ENCODE measurements at regions of chr3 and their contacts with region 1.

Region 1: DNA sequence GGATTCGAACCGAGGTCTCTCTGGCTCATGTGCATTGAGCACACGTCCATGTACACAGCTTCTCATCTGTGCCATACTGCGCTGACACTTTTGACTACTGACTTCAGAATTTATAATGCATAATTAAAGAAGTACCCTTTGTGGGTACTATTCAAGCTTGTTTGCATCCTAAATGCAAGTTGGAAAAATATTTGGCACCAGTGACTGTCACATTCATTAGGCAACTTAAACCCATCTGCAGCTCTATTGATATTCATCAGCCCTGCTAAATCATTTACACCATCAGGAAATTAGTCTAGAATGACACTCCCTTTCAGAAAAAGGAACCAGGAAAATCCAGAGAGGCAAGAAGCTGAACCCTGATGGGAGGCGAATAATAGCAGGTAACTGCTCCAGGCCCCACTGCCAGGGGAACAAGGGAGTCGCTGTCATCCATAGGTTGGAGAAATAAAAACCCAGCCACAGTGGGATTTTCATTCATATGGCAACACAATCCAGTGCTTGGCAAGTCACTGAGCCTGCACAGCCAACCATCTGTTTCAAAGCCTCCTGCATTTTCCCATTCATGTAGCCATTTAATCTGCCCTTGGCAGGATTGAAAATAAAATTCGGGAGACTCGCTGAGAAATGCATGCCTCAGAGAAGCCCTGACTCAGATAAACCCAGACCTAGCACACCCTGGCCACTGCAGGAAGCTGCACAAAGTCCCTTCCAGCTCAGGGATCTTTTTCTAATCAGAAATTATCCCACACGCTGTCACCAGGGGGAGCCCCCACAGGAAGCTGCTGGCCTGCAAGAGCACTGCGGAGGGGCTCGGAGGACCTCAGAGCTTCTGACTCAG is 103.0 kb upstream of the VEPH1 start:
- DNase-seq: peak; percentile 51
- CTCF ChIP-seq: peak; percentile 85

Region 2: DNA sequence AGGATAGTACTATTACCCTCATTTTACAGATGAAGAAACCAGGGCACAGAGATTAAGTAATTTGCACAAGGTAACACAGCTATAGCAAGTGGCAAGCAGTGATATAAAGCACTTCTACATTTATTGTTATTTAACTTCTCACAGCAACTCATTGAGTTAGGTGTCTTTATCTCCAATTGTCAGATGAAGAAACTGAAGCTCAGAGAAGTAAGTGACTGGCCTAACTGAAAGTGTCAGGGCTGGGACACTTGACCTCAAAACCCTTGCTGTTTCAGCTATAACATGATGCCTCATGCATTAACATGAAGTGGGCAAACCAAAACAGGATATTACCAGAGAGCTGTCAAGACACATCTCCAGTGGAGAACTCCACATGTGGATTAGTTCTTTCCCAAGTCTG is 845.9 kb before region 1 on chr3:
- CTCF ChIA-PET with region 1: no interaction called
- POLR2A ChIA-PET with region 1: no interaction called
- DNase-seq: peak; percentile 21
- CTCF ChIP-seq: no peak

Region 3: GRCh38 chr3:157532529-157533297 is 73.5 kb before region 1 on chr3:
- CTCF ChIA-PET with region 1: interaction called, 19 read pairs
- POLR2A ChIA-PET with region 1: no interaction called
- DNase-seq: peak; percentile 50
- CTCF ChIP-seq: peak; percentile 78

Region 4: GRCh38 chr3:157581371-157581770 is 24.9 kb before region 1 on chr3:
- CTCF ChIA-PET with region 1: interaction called, 12 read pairs
- POLR2A ChIA-PET with region 1: no interaction called
- DNase-seq: no peak
- CTCF ChIP-seq: no peak

Region 5: DNA sequence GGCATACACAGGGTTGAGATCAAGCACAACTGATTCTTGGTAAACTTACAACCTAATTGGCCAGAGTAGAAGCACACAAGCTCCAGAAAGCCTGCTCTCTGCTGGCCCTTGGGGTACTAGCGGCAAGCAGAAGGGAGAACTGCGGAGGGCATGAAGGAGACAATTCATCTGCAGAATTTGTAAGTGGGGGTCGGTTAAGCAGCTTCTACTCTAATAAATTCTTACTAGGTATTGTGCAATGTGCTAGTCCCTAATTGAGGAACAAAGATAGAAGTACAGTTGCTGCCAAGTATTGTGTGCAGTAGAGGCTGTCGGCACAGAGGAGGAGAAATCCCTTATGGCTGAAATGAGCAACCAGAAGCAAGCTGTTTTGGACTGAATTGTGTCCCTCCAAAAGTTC is 11.8 kb before region 1 on chr3:
- CTCF ChIA-PET with region 1: interaction called, 29 read pairs
- POLR2A ChIA-PET with region 1: no interaction called
- DNase-seq: no peak
- CTCF ChIP-seq: no peak

Region 6: DNA sequence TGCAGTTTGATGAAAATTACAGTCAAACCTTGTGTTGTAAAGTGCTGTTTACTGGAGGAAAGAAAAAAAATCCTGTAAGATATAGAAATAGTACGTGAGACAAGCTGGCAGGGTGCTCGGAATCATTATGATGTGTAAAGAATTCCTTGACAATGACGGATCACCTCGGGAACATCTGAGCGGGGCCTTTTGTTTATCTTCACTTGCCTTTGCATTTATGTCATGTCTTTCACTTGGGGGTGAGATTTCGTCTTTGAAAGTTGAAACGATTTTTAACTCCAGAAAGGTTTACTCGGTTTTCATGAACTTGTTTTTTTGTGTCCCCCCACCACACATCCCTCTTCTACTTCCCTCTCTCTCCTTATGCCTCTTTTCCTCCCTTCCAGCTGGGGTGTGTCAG is 25.2 kb after region 1 on chr3:
- CTCF ChIA-PET with region 1: interaction called, 13 read pairs
- POLR2A ChIA-PET with region 1: no interaction called
- DNase-seq: no peak
- CTCF ChIP-seq: no peak